ENCODE measurements at regions of chr7 and their contacts with region 1.

Region 1: GRCh38 chr7:158976849-158977593 is 120.7 kb downstream of the DYNC2I1 start:
- DNase-seq: peak; percentile 77 to 84
- H3K4me3 ChIP-seq: peak overlapping the region; percentile 31
- H3K4me3 Mint-ChIP-seq: peak overlapping the region; percentile 77
- H3K27ac Mint-ChIP-seq: peak overlapping the region; percentile 71
- H3K4me1 ChIP-seq: no peaks in the 10 kb centered on the region
- H3K4me1 Mint-ChIP-seq: peaks cover 7% of the 10 kb centered on the region
- H3K27me3 ChIP-seq: no peaks in the 10 kb centered on the region
- H3K27me3 Mint-ChIP-seq: no peaks in the 10 kb centered on the region
- CTCF ChIP-seq: peak; percentile 78 to 80

Region 2: DNA sequence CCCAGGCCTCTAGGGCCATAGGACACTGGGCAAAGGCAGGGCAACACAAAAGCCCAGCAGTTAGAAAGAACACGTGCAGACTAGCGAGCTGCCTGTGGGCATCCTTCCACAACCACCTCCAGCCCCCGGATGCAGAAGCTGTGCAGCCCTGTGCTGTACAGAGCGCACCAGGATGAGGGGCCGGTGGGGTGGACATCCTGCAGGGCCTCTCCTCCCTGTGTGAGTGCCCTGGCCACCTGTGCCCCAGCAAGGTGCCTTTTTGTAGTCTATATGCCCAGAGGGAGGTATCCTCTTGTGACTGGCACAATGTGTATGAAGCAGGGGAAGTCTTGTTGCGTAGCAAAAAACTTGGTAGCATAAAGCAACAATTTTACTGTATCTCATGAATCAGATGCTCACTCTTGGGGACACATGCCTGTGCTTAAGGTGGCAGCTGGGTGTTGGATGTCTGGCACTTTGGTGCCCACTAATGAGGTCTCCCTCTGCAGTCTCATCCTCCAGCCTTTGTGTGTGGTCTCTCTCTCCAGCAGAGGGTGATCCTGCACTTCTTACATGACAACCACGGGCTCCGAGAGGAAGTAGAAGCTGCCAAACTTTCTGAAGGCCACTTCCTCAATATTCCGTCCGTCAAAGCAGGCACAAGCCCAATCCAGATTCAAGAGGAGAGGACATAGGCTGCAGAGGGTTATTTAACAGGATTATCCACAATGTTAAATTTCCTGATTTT is 281.1 kb before region 1 on chr7:
- CTCF ChIA-PET with region 1: interaction called, 3 read pairs
- POLR2A ChIA-PET with region 1: no interaction called
- intact Hi-C with region 1: loop called (anchors 1 kb)
- DNase-seq: peak in 1 of 2 experiments; percentile 36
- H3K4me3 ChIP-seq: no peak overlapping the region
- H3K4me3 Mint-ChIP-seq: no peak overlapping the region
- H3K27ac Mint-ChIP-seq: no peak overlapping the region
- H3K4me1 ChIP-seq: no peaks in the 10 kb centered on the region
- H3K4me1 Mint-ChIP-seq: no peaks in the 10 kb centered on the region
- H3K27me3 ChIP-seq: no peaks in the 10 kb centered on the region
- H3K27me3 Mint-ChIP-seq: no peaks in the 10 kb centered on the region
- CTCF ChIP-seq: peak in 1 of 2 experiments; percentile 53

Region 3: DNA sequence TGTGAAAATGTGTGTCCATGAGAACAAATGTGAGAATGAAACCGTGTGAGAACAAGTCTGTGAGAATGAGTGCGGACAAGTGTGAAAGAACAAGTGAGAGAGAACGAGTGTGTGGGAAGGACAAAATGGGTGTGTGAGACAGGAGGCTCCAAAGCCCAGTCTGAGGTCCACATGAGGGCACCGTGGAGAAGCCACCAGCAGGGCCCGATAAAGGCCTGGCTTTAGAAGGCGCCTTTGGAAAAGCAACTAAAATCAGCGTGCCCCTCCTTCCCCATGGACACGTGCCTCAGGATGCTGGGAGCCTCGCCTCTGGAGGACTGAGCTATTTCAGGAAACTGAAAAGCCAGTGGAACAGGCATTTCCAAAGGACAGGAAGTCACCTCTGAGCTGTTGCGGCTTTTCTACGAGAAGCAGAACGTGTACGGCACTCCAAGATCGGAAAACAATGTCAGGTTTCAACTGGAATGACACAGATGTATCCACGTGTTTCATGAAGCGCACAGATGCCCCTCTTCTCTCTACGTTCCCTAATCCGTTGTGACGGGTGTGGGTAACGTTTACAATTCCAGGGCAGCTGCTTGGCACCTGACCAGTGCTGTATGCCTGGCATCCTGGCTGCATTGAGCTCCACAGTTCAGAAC is 194.1 kb before region 1 on chr7:
- CTCF ChIA-PET with region 1: interaction called, 6 read pairs
- POLR2A ChIA-PET with region 1: no interaction called
- intact Hi-C with region 1: loop called (anchors 1 kb)
- DNase-seq: peak; percentile 46 to 50
- H3K4me3 ChIP-seq: no peak overlapping the region
- H3K4me3 Mint-ChIP-seq: no peak overlapping the region
- H3K27ac Mint-ChIP-seq: no peak overlapping the region
- H3K4me1 ChIP-seq: peaks cover 16% of the 10 kb centered on the region
- H3K4me1 Mint-ChIP-seq: no peaks in the 10 kb centered on the region
- H3K27me3 ChIP-seq: no peaks in the 10 kb centered on the region
- H3K27me3 Mint-ChIP-seq: no peaks in the 10 kb centered on the region
- CTCF ChIP-seq: peak in 1 of 2 experiments; percentile 31

Region 4: GRCh38 chr7:158885624-158886023 is 91.4 kb before region 1 on chr7:
- CTCF ChIA-PET with region 1: interaction called, 11 read pairs
- POLR2A ChIA-PET with region 1: no interaction called
- intact Hi-C with region 1: loop called (anchors 1 kb)
- DNase-seq: no peak
- H3K4me3 ChIP-seq: no peak overlapping the region
- H3K4me3 Mint-ChIP-seq: no peak overlapping the region
- H3K27ac Mint-ChIP-seq: no peak overlapping the region
- H3K4me1 ChIP-seq: no peaks in the 10 kb centered on the region
- H3K4me1 Mint-ChIP-seq: no peaks in the 10 kb centered on the region
- H3K27me3 ChIP-seq: no peaks in the 10 kb centered on the region
- H3K27me3 Mint-ChIP-seq: no peaks in the 10 kb centered on the region
- CTCF ChIP-seq: peak; percentile 43 to 57